Pancreas (tissue), 10 donors: ENCODE measurements at regions of chr3 and their contacts with region 1.

Region 1: GRCh38 chr3:53195602-53196574 is 34.9 kb downstream of the PRKCD start:
- DNase-seq: peak in 4 of 6 donors; percentile 55 to 86 (median 66)
- ATAC-seq: peak; percentile 71 to 84 (median 80)
- H3K4me3 ChIP-seq: no peak overlapping the region
- H3K27ac ChIP-seq: no peak overlapping the region
- H3K4me1 ChIP-seq: peaks cover 0 to 9% (median 0%) of the 10 kb centered on the region in 3 donors
- H3K27me3 ChIP-seq: no peaks in the 10 kb centered on the region
- CTCF ChIP-seq: peak; percentile 91 to 100 (median 99)

Region 2: DNA sequence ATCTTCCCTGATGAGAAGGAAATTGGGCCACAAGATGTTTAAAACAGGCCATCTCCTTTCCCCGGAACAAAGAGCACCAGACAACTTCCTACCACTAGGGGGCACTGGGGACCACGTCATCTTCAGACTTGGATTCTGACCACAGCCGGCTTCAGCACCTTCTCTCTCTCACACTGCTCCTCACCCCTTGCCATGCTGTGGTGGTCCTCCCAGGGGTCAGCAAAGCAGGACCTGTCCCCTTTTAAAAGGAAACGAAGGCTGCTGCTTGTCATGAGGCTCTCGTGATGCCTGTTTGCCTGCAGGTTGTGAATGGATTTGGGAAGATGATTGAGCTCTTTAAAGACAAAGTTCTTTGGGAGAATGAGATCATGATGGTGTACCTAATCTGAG is 81.9 kb before region 1 on chr3:
- intact Hi-C with region 1: loop called in 2 of 3 experiments (anchors 2 to 5 kb)
- DNase-seq: peak; percentile 64 to 84 (median 76)
- ATAC-seq: peak; percentile 88 to 95 (median 92)
- H3K4me3 ChIP-seq: no peak overlapping the region
- H3K27ac ChIP-seq: no peak overlapping the region
- H3K4me1 ChIP-seq: peaks cover 0 to 4% (median 0%) of the 10 kb centered on the region in 3 donors
- H3K27me3 ChIP-seq: no peaks in the 10 kb centered on the region
- CTCF ChIP-seq: peak; percentile 83 to 91 (median 86)

Region 3: DNA sequence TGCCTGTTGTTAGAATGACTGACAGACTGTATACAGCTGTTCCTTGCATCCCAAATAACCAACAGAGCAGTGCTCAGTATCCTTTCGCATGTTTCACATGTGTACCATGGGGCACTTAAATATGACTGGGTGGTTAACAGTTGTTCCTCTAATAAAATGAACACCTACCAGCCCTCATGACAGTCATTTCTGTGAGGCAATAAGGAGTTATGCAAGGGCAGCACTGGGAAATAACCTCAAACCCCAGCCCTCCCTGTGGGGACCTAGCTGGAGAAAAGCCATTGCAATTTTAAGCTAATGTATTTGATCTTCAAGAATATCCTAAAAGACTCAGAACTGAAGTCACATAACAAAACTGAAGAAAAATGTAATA is 73.0 kb before region 1 on chr3:
- intact Hi-C with region 1: loop called in 2 of 3 experiments (anchors 5 kb)
- DNase-seq: no peak
- ATAC-seq: no peak
- H3K4me3 ChIP-seq: no peak overlapping the region
- H3K27ac ChIP-seq: no peak overlapping the region
- H3K4me1 ChIP-seq: peaks cover 0 to under 1% (median 0%) of the 10 kb centered on the region in 3 donors
- H3K27me3 ChIP-seq: no peaks in the 10 kb centered on the region
- CTCF ChIP-seq: no peak

Region 4: DNA sequence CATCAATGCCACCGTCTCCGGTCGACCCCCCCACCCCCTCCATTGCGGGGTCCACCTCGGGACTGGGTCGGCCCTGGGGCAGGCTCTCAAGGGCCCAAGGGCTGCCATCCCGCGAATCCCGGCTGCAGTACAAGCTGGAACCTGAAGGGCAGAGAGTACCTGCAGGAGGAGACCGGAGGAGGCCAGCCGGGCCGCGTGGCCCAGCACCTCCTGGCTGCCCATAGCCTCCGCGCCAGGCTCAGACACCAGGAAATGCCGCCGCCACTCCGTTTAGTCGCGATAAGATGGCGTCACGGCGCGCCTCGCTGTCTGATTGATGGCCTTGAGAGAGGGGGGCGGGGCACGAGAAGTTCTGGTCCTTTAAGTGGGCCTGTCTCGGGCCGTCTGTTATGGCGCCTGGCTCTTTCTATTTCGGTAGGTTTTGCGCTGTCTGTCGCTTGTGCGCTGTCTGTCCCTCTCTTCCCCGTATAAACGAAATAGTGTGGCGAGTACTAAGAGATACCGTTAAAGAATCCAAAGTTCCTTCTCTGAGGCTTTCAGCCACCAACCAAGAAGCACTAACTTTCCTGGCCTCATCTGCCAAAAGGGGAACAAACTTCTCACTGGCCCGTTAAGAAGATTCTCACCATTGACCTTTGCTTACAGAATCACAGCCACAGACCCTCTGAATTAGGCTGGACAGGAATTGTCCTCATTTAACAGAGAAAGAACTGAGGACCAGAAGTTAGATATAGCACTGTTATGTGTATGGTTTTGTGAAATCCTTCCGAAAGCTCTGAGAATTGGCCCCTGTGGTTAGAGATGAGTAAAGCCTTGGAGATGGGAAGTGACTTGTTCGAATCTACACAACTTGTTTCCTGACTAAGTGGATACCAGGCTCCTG is 65.5 kb before region 1 on chr3 and contains the start of gene RFT1:
- intact Hi-C with region 1: loop called in 1 of 3 experiments (anchors 5 kb)
- DNase-seq: peak; percentile 96 to 99 (median 97)
- ATAC-seq: peak; percentile 89 to 96 (median 92)
- H3K4me3 ChIP-seq: peak within 1 kb of the TSS; percentile 68 to 91 (median 85)
- H3K27ac ChIP-seq: peak within 1 kb of the TSS; percentile 81 to 90 (median 88)
- H3K4me1 ChIP-seq: peaks cover 7 to 13% (median 9%) of the 10 kb centered on the region in 3 donors
- H3K27me3 ChIP-seq: no peaks in the 10 kb centered on the region
- CTCF ChIP-seq: no peak
- total RNA-seq, gene RFT1: 10.4 to 20.4 (median 17.8) TPM

Region 5: GRCh38 chr3:53328746-53329145 is 132.9 kb after region 1 on chr3:
- intact Hi-C with region 1: no loop called
- DNase-seq: no peak
- ATAC-seq: peak in 1 of 4 donors; percentile 24
- H3K4me3 ChIP-seq: no peak overlapping the region
- H3K27ac ChIP-seq: no peak overlapping the region
- H3K4me1 ChIP-seq: peaks cover 5 to 15% (median 6%) of the 10 kb centered on the region in 3 donors
- H3K27me3 ChIP-seq: no peaks in the 10 kb centered on the region
- CTCF ChIP-seq: no peak